RWPE1 (cell line): ENCODE measurements at regions of chr17 and their contacts with region 1.

Region 1: GRCh38 chr17:74961657-74962490 is 10.7 kb downstream of the HID1 start:
- DNase-seq: peak; percentile 81
- H3K27ac ChIP-seq: no peak overlapping the region
- CTCF ChIP-seq: peak; percentile 85

Region 2: GRCh38 chr17:74790161-74791054 is 171.5 kb before region 1 on chr17:
- CTCF ChIA-PET with region 1: interaction called, 13 read pairs
- POLR2A ChIA-PET with region 1: no interaction called
- DNase-seq: no peak
- H3K27ac ChIP-seq: no peak overlapping the region
- CTCF ChIP-seq: no peak

Region 3: DNA sequence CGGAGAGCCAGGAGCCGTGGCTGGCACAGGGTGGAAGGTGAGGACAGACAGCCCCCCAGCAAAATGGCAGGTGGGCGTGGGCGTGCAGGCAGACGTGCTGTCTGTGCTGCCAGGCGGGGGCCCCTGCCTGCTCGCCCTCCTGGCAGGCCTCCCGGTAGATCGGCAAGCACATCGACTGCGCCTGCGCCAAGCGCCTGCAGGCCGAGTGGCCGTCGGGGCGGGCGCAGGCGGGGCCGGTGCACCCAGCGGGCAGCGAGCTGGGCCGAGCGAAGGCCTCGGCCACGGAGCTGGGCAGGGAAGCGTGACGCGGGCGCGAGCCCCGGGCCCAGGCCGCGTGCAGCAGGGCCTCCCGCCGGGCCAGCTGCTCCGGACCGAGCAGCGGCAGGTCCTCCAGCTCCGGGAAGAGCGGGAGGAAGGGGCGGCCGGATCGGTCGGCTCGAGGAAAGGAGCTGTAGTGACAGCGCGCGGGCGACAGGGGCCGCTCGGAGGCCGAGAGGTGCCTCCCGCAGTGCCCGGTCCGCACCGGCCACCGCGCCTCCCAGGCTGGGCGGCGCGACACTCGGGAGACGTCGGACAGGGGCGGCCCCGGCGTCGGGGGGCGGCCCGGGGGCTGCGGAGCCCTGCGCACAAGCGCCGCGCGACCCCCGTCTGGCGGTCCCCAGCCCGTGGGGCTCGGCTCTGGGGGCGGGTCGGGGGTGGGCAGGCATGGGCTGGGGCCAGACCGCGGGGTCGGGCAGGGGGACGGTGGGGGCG is 119.1 kb before region 1 on chr17:
- CTCF ChIA-PET with region 1: interaction called, 10 read pairs
- POLR2A ChIA-PET with region 1: no interaction called
- DNase-seq: peak; percentile 57
- H3K27ac ChIP-seq: peak overlapping the region; percentile 60
- CTCF ChIP-seq: peak; percentile 56

Region 4: GRCh38 chr17:74859459-74860228 is 102.2 kb before region 1 on chr17 and contains the start of gene GRIN2C:
- CTCF ChIA-PET with region 1: no interaction called
- POLR2A ChIA-PET with region 1: no interaction called
- DNase-seq: no peak
- H3K27ac ChIP-seq: no peak within 1 kb of the TSS
- CTCF ChIP-seq: peak; percentile 60

Region 5: GRCh38 chr17:74877592-74878548 is 84.0 kb before region 1 on chr17:
- CTCF ChIA-PET with region 1: no interaction called
- POLR2A ChIA-PET with region 1: no interaction called
- DNase-seq: peak; percentile 56
- H3K27ac ChIP-seq: peak overlapping the region; percentile 43
- CTCF ChIP-seq: no peak

Region 6: GRCh38 chr17:74923533-74924249 is 38.2 kb before region 1 on chr17:
- CTCF ChIA-PET with region 1: interaction called, 113 read pairs
- POLR2A ChIA-PET with region 1: no interaction called
- DNase-seq: peak; percentile 73
- H3K27ac ChIP-seq: no peak overlapping the region
- CTCF ChIP-seq: peak; percentile 96

Region 7: GRCh38 chr17:74972107-74972972 is 10.5 kb after region 1 on chr17 and contains the start of gene HID1:
- CTCF ChIA-PET with region 1: interaction called, 19 read pairs
- POLR2A ChIA-PET with region 1: no interaction called
- DNase-seq: peak; percentile 69
- H3K27ac ChIP-seq: no peak within 1 kb of the TSS
- CTCF ChIP-seq: no peak

Region 8: GRCh38 chr17:75006653-75007052 is 44.8 kb after region 1 on chr17:
- CTCF ChIA-PET with region 1: interaction called, 35 read pairs
- POLR2A ChIA-PET with region 1: no interaction called
- DNase-seq: no peak
- H3K27ac ChIP-seq: no peak overlapping the region
- CTCF ChIP-seq: no peak

Region 9: DNA sequence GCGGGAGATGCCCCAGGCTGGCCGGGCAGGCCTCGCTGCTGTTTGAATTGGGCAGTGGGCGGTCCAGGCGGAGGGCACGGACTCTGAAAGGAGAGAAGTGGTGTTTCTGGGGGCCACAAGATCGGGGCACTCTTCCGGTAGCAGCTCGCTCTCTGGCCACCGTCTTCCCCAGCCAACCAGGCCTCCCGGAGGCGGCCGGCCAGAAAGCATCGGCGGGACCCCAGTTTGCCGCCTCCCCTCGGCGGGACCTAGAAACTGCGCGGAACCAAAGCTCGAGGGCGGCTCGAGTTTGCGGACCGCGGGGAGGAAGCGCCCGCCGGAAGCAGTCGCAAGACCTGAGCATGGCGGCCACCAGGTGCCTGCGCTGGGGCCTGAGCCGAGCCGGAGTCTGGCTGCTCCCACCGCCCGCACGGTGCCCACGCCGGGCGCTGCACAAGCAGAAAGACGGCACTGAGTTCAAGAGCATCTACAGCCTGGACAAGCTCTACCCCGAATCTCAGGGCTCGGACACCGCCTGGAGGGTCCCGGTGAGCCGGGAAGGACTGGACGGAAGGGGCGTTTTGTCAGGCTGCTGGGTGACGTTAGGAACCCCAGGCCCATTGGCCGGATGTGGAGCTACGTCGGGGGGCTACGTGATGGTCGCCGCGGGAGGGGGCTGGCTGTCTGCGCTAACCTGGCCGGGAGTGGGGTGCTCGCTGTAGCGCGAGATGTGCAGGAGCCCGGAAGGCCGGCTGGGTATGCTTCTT is 50.6 kb after region 1 on chr17 and contains the start of gene MRPL58:
- CTCF ChIA-PET with region 1: interaction called, 35 read pairs
- POLR2A ChIA-PET with region 1: interaction called, 3 read pairs
- DNase-seq: peak; percentile 85
- H3K27ac ChIP-seq: peak within 1 kb of the TSS; percentile 92
- CTCF ChIP-seq: no peak; the same call in none of the 2 replicates